Caco-2 (cell line): ENCODE measurements at regions of chr10 and their contacts with region 1.

Region 1: GRCh38 chr10:11270135-11270857 is 252.6 kb downstream of the CELF2 start:
- DNase-seq: peak; percentile 88 to 91
- H3K4me3 ChIP-seq: no peak overlapping the region
- H3K4me3 Mint-ChIP-seq: peak overlapping the region; percentile 17
- H3K27ac Mint-ChIP-seq: no peak overlapping the region
- H3K4me1 ChIP-seq: peaks cover 9% of the 10 kb centered on the region
- H3K4me1 Mint-ChIP-seq: peaks cover 7% of the 10 kb centered on the region
- H3K27me3 ChIP-seq: peaks cover 5% of the 10 kb centered on the region; the same call in 1 of the 2 replicates
- H3K27me3 Mint-ChIP-seq: peaks cover 40% of the 10 kb centered on the region
- CTCF ChIP-seq: peak; percentile 96 to 99

Region 2: GRCh38 chr10:9331583-9332008 is 1938.7 kb before region 1 on chr10:
- CTCF ChIA-PET with region 1: no interaction called
- POLR2A ChIA-PET with region 1: no interaction called
- intact Hi-C with region 1: loop called (anchors 1 kb)
- DNase-seq: peak in 1 of 2 experiments; percentile 42
- H3K4me3 ChIP-seq: no peak overlapping the region
- H3K4me3 Mint-ChIP-seq: no peak overlapping the region
- H3K27ac Mint-ChIP-seq: no peak overlapping the region
- H3K4me1 ChIP-seq: no peaks in the 10 kb centered on the region
- H3K4me1 Mint-ChIP-seq: no peaks in the 10 kb centered on the region
- H3K27me3 ChIP-seq: no peaks in the 10 kb centered on the region
- H3K27me3 Mint-ChIP-seq: peaks cover 12% of the 10 kb centered on the region
- CTCF ChIP-seq: peak; percentile 81 to 88

Region 3: DNA sequence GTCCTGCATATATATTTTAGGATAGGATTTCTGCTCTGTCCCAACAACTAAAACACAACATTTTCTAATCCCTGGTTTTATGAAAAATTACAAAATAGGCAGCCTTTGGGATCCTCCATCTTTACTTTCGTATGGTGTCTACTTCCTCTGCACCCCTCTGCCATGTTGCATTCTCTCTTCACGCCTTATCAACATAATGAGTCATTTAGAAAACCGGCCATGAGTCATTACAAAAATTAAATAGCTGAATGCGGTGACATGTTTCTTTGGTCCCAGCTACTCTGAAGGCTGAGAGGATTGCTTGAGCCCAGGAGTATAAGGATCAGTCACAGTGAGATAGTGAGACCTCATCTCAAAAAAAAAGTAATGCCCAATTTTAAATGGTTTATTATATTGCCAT is 400.7 kb before region 1 on chr10:
- CTCF ChIA-PET with region 1: no interaction called
- POLR2A ChIA-PET with region 1: no interaction called
- intact Hi-C with region 1: no loop called
- DNase-seq: no peak
- H3K4me3 ChIP-seq: no peak overlapping the region
- H3K4me3 Mint-ChIP-seq: no peak overlapping the region
- H3K27ac Mint-ChIP-seq: no peak overlapping the region
- H3K4me1 ChIP-seq: no peaks in the 10 kb centered on the region
- H3K4me1 Mint-ChIP-seq: no peaks in the 10 kb centered on the region
- H3K27me3 ChIP-seq: no peaks in the 10 kb centered on the region
- H3K27me3 Mint-ChIP-seq: peaks cover 16% of the 10 kb centered on the region
- CTCF ChIP-seq: no peak

Region 4: GRCh38 chr10:11113156-11113555 is 157.1 kb before region 1 on chr10:
- CTCF ChIA-PET with region 1: interaction called, 6 read pairs
- POLR2A ChIA-PET with region 1: no interaction called
- intact Hi-C with region 1: loop called (anchors 1 kb)
- DNase-seq: no peak
- H3K4me3 ChIP-seq: no peak overlapping the region
- H3K4me3 Mint-ChIP-seq: no peak overlapping the region
- H3K27ac Mint-ChIP-seq: no peak overlapping the region
- H3K4me1 ChIP-seq: no peaks in the 10 kb centered on the region
- H3K4me1 Mint-ChIP-seq: no peaks in the 10 kb centered on the region
- H3K27me3 ChIP-seq: 0 out of 2 replicates have a peak, but pooled peaks cover 2% of the 10 kb centered on the region
- H3K27me3 Mint-ChIP-seq: peaks cover 19% of the 10 kb centered on the region
- CTCF ChIP-seq: peak; percentile 28 to 30

Region 5: GRCh38 chr10:11178606-11179515 is 91.4 kb before region 1 on chr10:
- CTCF ChIA-PET with region 1: interaction called, 5 read pairs
- POLR2A ChIA-PET with region 1: no interaction called
- intact Hi-C with region 1: loop called (anchors 1 kb)
- DNase-seq: no peak
- H3K4me3 ChIP-seq: no peak overlapping the region
- H3K4me3 Mint-ChIP-seq: no peak overlapping the region
- H3K27ac Mint-ChIP-seq: no peak overlapping the region
- H3K4me1 ChIP-seq: no peaks in the 10 kb centered on the region
- H3K4me1 Mint-ChIP-seq: no peaks in the 10 kb centered on the region
- H3K27me3 ChIP-seq: no peaks in the 10 kb centered on the region
- H3K27me3 Mint-ChIP-seq: peaks cover 29% of the 10 kb centered on the region
- CTCF ChIP-seq: no peak